Activated CD4-positive, alpha-beta memory T cell treated with anti-CD3 and anti-CD28 coated beads for 36 hours (primary cell): ENCODE measurements at regions of chr1 and their contacts with region 1.

Region 1: GRCh38 chr1:101101362-101101761 is 75.8 kb upstream of the DPH5 start:
- DNase-seq: no peak
- H3K4me3 Mint-ChIP-seq: no peak overlapping the region
- H3K27ac Mint-ChIP-seq: no peak overlapping the region
- H3K4me1 Mint-ChIP-seq: no peaks in the 10 kb centered on the region
- H3K27me3 Mint-ChIP-seq: no peaks in the 10 kb centered on the region

Region 2: GRCh38 chr1:101043776-101044175 is 57.6 kb before region 1 on chr1:
- CTCF ChIA-PET with region 1: no interaction called
- POLR2A ChIA-PET with region 1: no interaction called
- intact Hi-C with region 1: loop called (anchors 5 kb)
- DNase-seq: no peak
- H3K4me3 Mint-ChIP-seq: no peak overlapping the region
- H3K27ac Mint-ChIP-seq: no peak overlapping the region
- H3K4me1 Mint-ChIP-seq: no peaks in the 10 kb centered on the region
- H3K27me3 Mint-ChIP-seq: no peaks in the 10 kb centered on the region

Region 3: GRCh38 chr1:101309334-101310311 is 208.3 kb after region 1 on chr1:
- CTCF ChIA-PET with region 1: no interaction called
- POLR2A ChIA-PET with region 1: no interaction called
- intact Hi-C with region 1: no loop called
- DNase-seq: peak; percentile 77
- H3K4me3 Mint-ChIP-seq: peak overlapping the region; percentile 69
- H3K27ac Mint-ChIP-seq: peak overlapping the region; percentile 78
- H3K4me1 Mint-ChIP-seq: peaks cover 74% of the 10 kb centered on the region
- H3K27me3 Mint-ChIP-seq: no peaks in the 10 kb centered on the region